ENCODE measurements at regions of chr11 and their contacts with region 1.

Region 1: GRCh38 chr11:74826901-74827300 is 78.3 kb downstream of the RNF169 start:
- DNase-seq: no peak
- ATAC-seq: no peak
- H3K4me3 ChIP-seq: no peak overlapping the region
- H3K4me3 Mint-ChIP-seq: no peak overlapping the region
- H3K27ac ChIP-seq: no peak overlapping the region
- H3K27ac Mint-ChIP-seq: no peak overlapping the region
- H3K4me1 ChIP-seq: peaks cover 1% of the 10 kb centered on the region
- H3K4me1 Mint-ChIP-seq: peaks cover 18 to 32% of the 10 kb centered on the region in 2 donors
- H3K27me3 ChIP-seq: no peaks in the 10 kb centered on the region
- H3K27me3 Mint-ChIP-seq: no peaks in the 10 kb centered on the region
- CTCF ChIP-seq: no peak

Region 2: GRCh38 chr11:74004759-74005615 is 821.9 kb before region 1 on chr11:
- intact Hi-C with region 1: no loop called
- DNase-seq: peak; percentile 70 to 95
- ATAC-seq: peak; percentile 93 to 97 (median 93)
- H3K4me3 ChIP-seq: no peak overlapping the region
- H3K4me3 Mint-ChIP-seq: peak overlapping the region; percentile 86
- H3K27ac ChIP-seq: peak overlapping the region; percentile 76
- H3K27ac Mint-ChIP-seq: peak overlapping the region; percentile 91 to 93
- H3K4me1 ChIP-seq: peaks cover 77% of the 10 kb centered on the region
- H3K4me1 Mint-ChIP-seq: peaks cover 72 to 81% of the 10 kb centered on the region in 2 donors
- H3K27me3 ChIP-seq: no peaks in the 10 kb centered on the region
- H3K27me3 Mint-ChIP-seq: no peaks in the 10 kb centered on the region
- CTCF ChIP-seq: no peak

Region 3: GRCh38 chr11:74842967-74843366 is 16.1 kb after region 1 on chr11:
- intact Hi-C with region 1: no loop called
- DNase-seq: no peak
- ATAC-seq: no peak
- H3K4me3 ChIP-seq: no peak overlapping the region
- H3K4me3 Mint-ChIP-seq: no peak overlapping the region
- H3K27ac ChIP-seq: no peak overlapping the region
- H3K27ac Mint-ChIP-seq: no peak overlapping the region
- H3K4me1 ChIP-seq: peaks cover 10% of the 10 kb centered on the region
- H3K4me1 Mint-ChIP-seq: peaks cover 32 to 37% of the 10 kb centered on the region in 2 donors
- H3K27me3 ChIP-seq: no peaks in the 10 kb centered on the region
- H3K27me3 Mint-ChIP-seq: no peaks in the 10 kb centered on the region
- CTCF ChIP-seq: no peak

Region 4: DNA sequence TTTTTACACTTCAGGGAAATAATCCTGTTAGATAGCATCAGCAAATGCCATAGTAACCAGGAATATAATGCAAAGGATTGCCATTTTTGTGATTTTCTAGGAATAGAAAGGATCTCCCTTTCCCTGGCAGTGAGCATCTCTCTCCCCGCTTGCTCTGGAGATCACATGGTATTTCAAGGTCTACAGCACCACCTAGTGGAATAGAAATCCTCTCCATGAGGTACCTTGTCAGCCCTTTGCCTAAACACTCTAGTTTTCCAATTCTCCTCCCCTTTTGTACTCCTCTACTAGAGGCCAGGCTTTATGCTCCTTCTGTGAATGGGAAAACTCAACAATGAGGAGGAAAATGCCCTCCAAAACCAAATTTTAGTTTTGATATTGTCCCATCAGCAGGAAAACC is 43.6 kb after region 1 on chr11:
- intact Hi-C with region 1: loop called (anchors 5 kb)
- DNase-seq: peak in 1 of 2 donors; percentile 46
- ATAC-seq: peak in 1 of 3 donors; percentile 55
- H3K4me3 ChIP-seq: no peak overlapping the region
- H3K4me3 Mint-ChIP-seq: no peak overlapping the region
- H3K27ac ChIP-seq: no peak overlapping the region
- H3K27ac Mint-ChIP-seq: no peak overlapping the region
- H3K4me1 ChIP-seq: no peaks in the 10 kb centered on the region
- H3K4me1 Mint-ChIP-seq: no peaks in the 10 kb centered on the region
- H3K27me3 ChIP-seq: no peaks in the 10 kb centered on the region
- H3K27me3 Mint-ChIP-seq: no peaks in the 10 kb centered on the region
- CTCF ChIP-seq: peak; percentile 30

Region 5: GRCh38 chr11:75174781-75175370 is 348.0 kb after region 1 on chr11:
- intact Hi-C with region 1: no loop called
- DNase-seq: peak in 1 of 2 donors; percentile 15
- ATAC-seq: peak in 1 of 3 donors; percentile 18
- H3K4me3 ChIP-seq: no peak overlapping the region
- H3K4me3 Mint-ChIP-seq: no peak overlapping the region
- H3K27ac ChIP-seq: no peak overlapping the region
- H3K27ac Mint-ChIP-seq: peak overlapping the region in 1 of 2 donors; percentile 22
- H3K4me1 ChIP-seq: peaks cover 4% of the 10 kb centered on the region
- H3K4me1 Mint-ChIP-seq: peaks cover 0 to 7% of the 10 kb centered on the region in 2 donors
- H3K27me3 ChIP-seq: no peaks in the 10 kb centered on the region
- H3K27me3 Mint-ChIP-seq: no peaks in the 10 kb centered on the region
- CTCF ChIP-seq: no peak